K562 (cell line): ENCODE measurements at regions of chr16 and their contacts with region 1.

Region 1: GRCh38 chr16:68074850-68075555 is 10.2 kb upstream of the NFATC3 start:
- DNase-seq: no peak
- ATAC-seq: no peak
- H3K4me3 ChIP-seq: no peak overlapping the region
- H3K27ac ChIP-seq: no peak overlapping the region
- H3K4me1 ChIP-seq: peaks cover 31 to 33% of the 10 kb centered on the region in 2 experiments
- H3K27me3 ChIP-seq: no peaks in the 10 kb centered on the region
- CTCF ChIP-seq: no peak
- EP300 ChIP-seq: no peak
- POLR2A ChIP-seq: no peak
- RAD21 ChIP-seq: no peak

Region 2: GRCh38 chr16:68064791-68065365 is 10.1 kb before region 1 on chr16:
- CTCF ChIA-PET with region 1: no interaction called
- POLR2A ChIA-PET with region 1: interaction called, 10 read pairs
- in situ Hi-C with region 1: no loop called
- intact Hi-C with region 1: no loop called
- DNase-seq: peak; percentile 85 to 88 (median 86)
- ATAC-seq: peak; percentile 99
- H3K4me3 ChIP-seq: no peak overlapping the region
- H3K27ac ChIP-seq: peak overlapping the region; percentile 27; the same call in 1 of the 3 replicates
- H3K4me1 ChIP-seq: peaks cover 5 to 10% of the 10 kb centered on the region in 2 experiments
- H3K27me3 ChIP-seq: no peaks in the 10 kb centered on the region
- CTCF ChIP-seq: peak; percentile 86 to 95 (median 91)
- EP300 ChIP-seq: peak; percentile 54
- POLR2A ChIP-seq: no peak
- RAD21 ChIP-seq: peak; percentile 72 to 78

Region 3: GRCh38 chr16:68085259-68086071 is 10.5 kb after region 1 on chr16 and contains the start of gene NFATC3:
- CTCF ChIA-PET with region 1: no interaction called
- POLR2A ChIA-PET with region 1: interaction called, 33 read pairs
- in situ Hi-C with region 1: no loop called
- intact Hi-C with region 1: no loop called
- DNase-seq: peak; percentile 93 to 99 (median 95)
- ATAC-seq: peak; percentile 70
- H3K4me3 ChIP-seq: peak within 1 kb of the TSS; percentile 72
- H3K27ac ChIP-seq: peak within 1 kb of the TSS; percentile 97
- H3K4me1 ChIP-seq: peaks cover 36 to 38% of the 10 kb centered on the region in 2 experiments
- H3K27me3 ChIP-seq: no peaks in the 10 kb centered on the region
- CTCF ChIP-seq: 0 out of 6 replicates have a peak, but pooled peaks of 1 of the 3 experiments have one; percentile 13
- EP300 ChIP-seq: no peak
- POLR2A ChIP-seq: peak; percentile 12
- RAD21 ChIP-seq: no peak
- polyA plus RNA-seq, gene NFATC3: 15.7 to 19.1 TPM

Region 4: DNA sequence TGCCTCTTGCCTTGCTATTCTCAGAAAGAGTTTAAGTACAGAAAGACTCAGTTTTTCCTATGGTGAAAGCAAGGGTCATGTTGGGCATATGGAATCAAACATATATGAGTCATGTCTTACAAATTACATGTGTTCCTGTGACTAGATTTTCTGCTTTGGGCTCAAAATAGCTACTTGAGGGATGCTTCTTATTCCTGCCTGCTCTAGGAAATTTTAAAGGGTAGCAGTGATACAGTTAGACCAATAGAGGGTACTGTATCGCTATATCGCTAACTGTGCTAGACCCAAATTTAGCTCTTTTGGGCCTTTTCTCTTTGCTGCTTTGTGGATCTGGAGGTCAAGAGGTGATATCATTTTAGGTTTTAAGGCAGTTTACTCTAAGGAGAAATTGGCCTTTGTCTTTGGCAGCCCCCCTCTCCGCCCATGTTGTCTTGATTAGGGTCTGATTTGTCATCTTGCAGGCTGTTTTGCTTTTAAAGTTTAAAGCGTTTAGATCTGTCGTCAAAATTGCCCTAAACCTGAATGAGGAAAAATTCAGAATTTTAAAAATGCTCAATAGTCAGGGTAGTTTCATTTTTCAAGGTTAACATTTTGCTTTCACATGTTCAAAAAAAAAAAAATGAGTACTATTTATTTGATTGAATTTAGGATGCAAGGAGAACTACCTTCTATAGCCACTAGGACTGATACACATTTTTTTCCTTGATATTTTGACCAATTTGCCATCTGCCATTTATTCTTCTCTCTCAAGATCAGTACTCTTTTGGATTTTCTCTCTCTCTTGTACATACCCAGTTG is 19.0 kb after region 1 on chr16:
- CTCF ChIA-PET with region 1: no interaction called
- POLR2A ChIA-PET with region 1: interaction called, 11 read pairs
- in situ Hi-C with region 1: no loop called
- intact Hi-C with region 1: no loop called
- DNase-seq: peak in 3 of 4 experiments; percentile 26 to 59 (median 31)
- ATAC-seq: peak; percentile 77
- H3K4me3 ChIP-seq: no peak overlapping the region
- H3K27ac ChIP-seq: peak overlapping the region; percentile 33; the same call in 2 of the 3 replicates
- H3K4me1 ChIP-seq: peaks cover 14 to 35% of the 10 kb centered on the region in 2 experiments; a peak in 4 of 5 replicates
- H3K27me3 ChIP-seq: no peaks in the 10 kb centered on the region
- CTCF ChIP-seq: peak; percentile 66 to 75 (median 71)
- EP300 ChIP-seq: no peak
- POLR2A ChIP-seq: no peak
- RAD21 ChIP-seq: peak; percentile 50 to 68; a peak in 3 of 4 replicates

Region 5: DNA sequence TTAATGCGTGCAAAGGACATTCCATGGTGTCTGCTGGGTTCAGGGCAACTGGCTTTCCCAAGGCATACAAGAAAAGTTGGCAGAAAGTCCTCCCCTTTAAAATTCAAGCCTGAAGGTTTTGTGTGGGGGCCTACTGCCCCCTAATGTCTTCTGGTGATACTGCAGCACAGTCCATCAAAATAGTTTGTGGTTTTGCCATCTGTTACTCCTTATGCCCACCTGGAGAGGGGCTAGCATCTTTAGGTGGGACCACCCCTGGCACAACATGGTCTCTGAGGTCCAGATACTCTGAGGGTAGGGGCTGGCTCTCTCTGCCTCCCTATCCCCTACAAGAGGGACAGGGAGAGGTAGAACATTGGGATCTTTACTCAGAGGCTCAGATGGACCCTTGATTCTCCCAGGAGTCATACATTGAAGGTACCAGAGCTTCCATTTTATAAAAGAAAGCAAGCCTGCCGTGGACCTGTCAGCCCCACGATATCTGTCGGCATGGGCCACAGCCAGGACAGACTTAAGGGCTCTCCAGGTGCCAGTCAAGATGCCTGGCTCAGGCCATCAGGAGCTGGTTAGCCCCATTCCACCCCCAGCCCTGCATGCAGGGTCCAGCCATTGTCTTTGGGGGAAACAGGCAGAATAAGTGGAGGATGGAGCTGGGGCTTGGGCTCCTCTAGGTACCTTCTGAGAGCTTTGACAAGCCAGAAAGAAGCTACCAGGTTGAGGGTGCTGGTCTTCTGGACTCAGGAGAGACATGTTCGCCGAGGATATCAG is 154.6 kb after region 1 on chr16:
- CTCF ChIA-PET with region 1: interaction called, 3 read pairs
- POLR2A ChIA-PET with region 1: no interaction called
- in situ Hi-C with region 1: loop called (anchors 10 kb)
- intact Hi-C with region 1: loop called (anchors 1 kb)
- DNase-seq: peak; percentile 59 to 65 (median 62)
- ATAC-seq: peak; percentile 58
- H3K4me3 ChIP-seq: no peak overlapping the region
- H3K27ac ChIP-seq: no peak overlapping the region
- H3K4me1 ChIP-seq: peaks cover 0 to 12% of the 10 kb centered on the region in 2 experiments; a peak in 1 of 5 replicates
- H3K27me3 ChIP-seq: no peaks in the 10 kb centered on the region
- CTCF ChIP-seq: peak; percentile 73 to 88 (median 87)
- EP300 ChIP-seq: no peak
- POLR2A ChIP-seq: no peak
- RAD21 ChIP-seq: peak; percentile 71 to 74